ENCODE measurements at regions of chr13 and their contacts with region 1.

Region 1: GRCh38 chr13:30617315-30618185 is at the start of gene USPL1:
- DNase-seq: peak; percentile 97 to 100 (median 99)
- ATAC-seq: peak; percentile 89
- H3K4me3 ChIP-seq: peak within 1 kb of the TSS; percentile 78 to 96
- H3K4me3 Mint-ChIP-seq: no peak within 1 kb of the TSS
- H3K27ac ChIP-seq: peak within 1 kb of the TSS; percentile 94 to 95
- H3K27ac Mint-ChIP-seq: no peak within 1 kb of the TSS
- H3K4me1 ChIP-seq: peaks cover 34% of the 10 kb centered on the region
- H3K4me1 Mint-ChIP-seq: peaks cover 39% of the 10 kb centered on the region
- H3K27me3 ChIP-seq: no peaks in the 10 kb centered on the region
- H3K27me3 Mint-ChIP-seq: no peaks in the 10 kb centered on the region
- CTCF ChIP-seq: no peak
- total RNA-seq, gene USPL1: 42.0 to 42.4 TPM

Region 2: DNA sequence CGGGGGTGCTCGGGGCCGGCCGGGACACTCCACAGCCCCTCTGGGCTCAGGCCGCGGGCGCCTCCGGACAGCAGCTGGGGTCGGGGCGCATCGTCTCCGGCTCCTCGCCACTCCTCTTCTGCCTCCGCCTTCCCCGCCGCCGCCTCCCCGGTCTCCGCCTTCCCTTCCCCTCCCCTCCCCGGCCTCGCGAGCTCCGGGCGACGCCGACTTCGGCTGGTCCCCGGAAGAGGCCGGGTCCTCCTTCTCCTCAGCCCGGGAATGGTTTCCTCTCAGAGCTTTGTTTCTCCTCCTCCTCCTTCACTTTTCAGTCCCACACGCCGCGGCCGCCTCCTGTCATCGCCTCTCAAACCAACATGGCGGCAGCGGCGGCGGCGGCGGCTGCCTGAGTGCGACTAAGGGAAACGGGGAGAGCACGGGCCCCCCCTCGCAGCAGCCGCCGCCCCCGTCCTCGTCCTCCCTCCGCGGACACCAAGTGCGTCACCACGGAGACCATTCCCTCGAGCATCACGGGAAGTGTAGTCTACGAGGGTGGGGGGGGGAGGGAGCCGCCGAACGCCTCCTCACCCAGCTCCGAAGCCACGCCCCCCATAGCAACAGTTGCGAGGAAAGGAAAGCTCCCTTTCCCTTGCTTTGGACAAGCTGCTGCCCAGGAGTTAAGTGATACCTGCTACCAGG is 767.2 kb before region 1 on chr13 and contains the start of gene UBL3:
- CTCF ChIA-PET with region 1: no interaction called
- POLR2A ChIA-PET with region 1: interaction called, 17 read pairs
- intact Hi-C with region 1: loop called (anchors 1 to 2 kb)
- DNase-seq: peak; percentile 89 to 97 (median 94)
- ATAC-seq: peak; percentile 89
- H3K4me3 ChIP-seq: peak within 1 kb of the TSS; percentile 84 to 86
- H3K4me3 Mint-ChIP-seq: peak within 1 kb of the TSS; percentile 93
- H3K27ac ChIP-seq: peak within 1 kb of the TSS; percentile 90 to 96
- H3K27ac Mint-ChIP-seq: peak within 1 kb of the TSS; percentile 99
- H3K4me1 ChIP-seq: peaks cover 13% of the 10 kb centered on the region
- H3K4me1 Mint-ChIP-seq: peaks cover 24% of the 10 kb centered on the region
- H3K27me3 ChIP-seq: no peaks in the 10 kb centered on the region
- H3K27me3 Mint-ChIP-seq: no peaks in the 10 kb centered on the region
- CTCF ChIP-seq: no peak
- total RNA-seq, gene UBL3: 40.0 to 43.1 TPM

Region 3: DNA sequence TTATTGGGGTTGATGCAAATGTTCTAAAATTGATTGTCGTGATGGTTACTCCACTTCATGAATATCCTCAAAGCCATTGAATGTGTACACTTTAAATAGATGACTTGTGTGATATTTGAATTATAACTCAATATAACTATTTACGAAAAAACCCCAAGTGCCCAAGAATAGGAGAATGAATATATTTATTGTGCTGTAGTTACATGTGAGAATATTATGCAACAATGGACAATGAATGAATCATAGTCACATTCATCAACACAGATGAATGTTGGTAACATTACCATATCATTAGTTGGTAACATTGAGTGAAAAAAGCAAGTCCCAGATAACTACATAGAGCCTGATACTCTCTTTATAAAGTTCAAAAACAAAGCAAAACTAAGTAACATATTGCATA is 639.3 kb before region 1 on chr13:
- CTCF ChIA-PET with region 1: no interaction called
- POLR2A ChIA-PET with region 1: no interaction called
- intact Hi-C with region 1: no loop called
- DNase-seq: no peak
- ATAC-seq: no peak
- H3K4me3 ChIP-seq: no peak overlapping the region
- H3K4me3 Mint-ChIP-seq: no peak overlapping the region
- H3K27ac ChIP-seq: no peak overlapping the region
- H3K27ac Mint-ChIP-seq: no peak overlapping the region
- H3K4me1 ChIP-seq: no peaks in the 10 kb centered on the region
- H3K4me1 Mint-ChIP-seq: peaks cover 2% of the 10 kb centered on the region
- H3K27me3 ChIP-seq: no peaks in the 10 kb centered on the region
- H3K27me3 Mint-ChIP-seq: no peaks in the 10 kb centered on the region
- CTCF ChIP-seq: no peak

Region 4: GRCh38 chr13:30395192-30396084 is 222.1 kb before region 1 on chr13:
- CTCF ChIA-PET with region 1: no interaction called
- POLR2A ChIA-PET with region 1: interaction called, 12 read pairs
- intact Hi-C with region 1: no loop called
- DNase-seq: peak; percentile 44 to 88 (median 79)
- ATAC-seq: peak; percentile 62
- H3K4me3 ChIP-seq: peak overlapping the region; percentile 60 to 80
- H3K4me3 Mint-ChIP-seq: peak overlapping the region; percentile 89
- H3K27ac ChIP-seq: peak overlapping the region; percentile 83 to 84
- H3K27ac Mint-ChIP-seq: peak overlapping the region; percentile 95
- H3K4me1 ChIP-seq: peaks cover 21% of the 10 kb centered on the region
- H3K4me1 Mint-ChIP-seq: peaks cover 50% of the 10 kb centered on the region
- H3K27me3 ChIP-seq: no peaks in the 10 kb centered on the region
- H3K27me3 Mint-ChIP-seq: no peaks in the 10 kb centered on the region
- CTCF ChIP-seq: no peak

Region 5: GRCh38 chr13:30629527-30629926 is 12.0 kb after region 1 on chr13:
- CTCF ChIA-PET with region 1: no interaction called
- POLR2A ChIA-PET with region 1: interaction called, 20 read pairs
- intact Hi-C with region 1: loop called in 1 of 2 experiments (anchors 1 kb)
- DNase-seq: no peak
- ATAC-seq: no peak
- H3K4me3 ChIP-seq: no peak overlapping the region
- H3K4me3 Mint-ChIP-seq: no peak overlapping the region
- H3K27ac ChIP-seq: no peak overlapping the region
- H3K27ac Mint-ChIP-seq: no peak overlapping the region
- H3K4me1 ChIP-seq: peaks cover 11% of the 10 kb centered on the region
- H3K4me1 Mint-ChIP-seq: peaks cover 54% of the 10 kb centered on the region
- H3K27me3 ChIP-seq: no peaks in the 10 kb centered on the region
- H3K27me3 Mint-ChIP-seq: no peaks in the 10 kb centered on the region
- CTCF ChIP-seq: no peak

Region 6: GRCh38 chr13:30802953-30803478 is 185.5 kb after region 1 on chr13:
- CTCF ChIA-PET with region 1: interaction called, 6 read pairs
- POLR2A ChIA-PET with region 1: interaction called, 3 read pairs
- intact Hi-C with region 1: loop called in 1 of 2 experiments (anchors 2 kb)
- DNase-seq: peak; percentile 61 to 89 (median 80)
- ATAC-seq: peak; percentile 99
- H3K4me3 ChIP-seq: no peak overlapping the region
- H3K4me3 Mint-ChIP-seq: peak overlapping the region; percentile 49
- H3K27ac ChIP-seq: no peak overlapping the region
- H3K27ac Mint-ChIP-seq: no peak overlapping the region
- H3K4me1 ChIP-seq: no peaks in the 10 kb centered on the region
- H3K4me1 Mint-ChIP-seq: peaks cover 11% of the 10 kb centered on the region
- H3K27me3 ChIP-seq: no peaks in the 10 kb centered on the region
- H3K27me3 Mint-ChIP-seq: no peaks in the 10 kb centered on the region
- CTCF ChIP-seq: peak; percentile 95